A673 (cell line): ENCODE measurements at regions of chr22 and their contacts with region 1.

Region 1: GRCh38 chr22:38716826-38717225 is 11.1 kb downstream of the GTPBP1 start:
- DNase-seq: no peak
- H3K4me3 ChIP-seq: no peak overlapping the region
- H3K27ac ChIP-seq: no peak overlapping the region
- H3K4me1 ChIP-seq: peaks cover 35% of the 10 kb centered on the region
- H3K27me3 ChIP-seq: no peaks in the 10 kb centered on the region
- CTCF ChIP-seq: no peak

Region 2: DNA sequence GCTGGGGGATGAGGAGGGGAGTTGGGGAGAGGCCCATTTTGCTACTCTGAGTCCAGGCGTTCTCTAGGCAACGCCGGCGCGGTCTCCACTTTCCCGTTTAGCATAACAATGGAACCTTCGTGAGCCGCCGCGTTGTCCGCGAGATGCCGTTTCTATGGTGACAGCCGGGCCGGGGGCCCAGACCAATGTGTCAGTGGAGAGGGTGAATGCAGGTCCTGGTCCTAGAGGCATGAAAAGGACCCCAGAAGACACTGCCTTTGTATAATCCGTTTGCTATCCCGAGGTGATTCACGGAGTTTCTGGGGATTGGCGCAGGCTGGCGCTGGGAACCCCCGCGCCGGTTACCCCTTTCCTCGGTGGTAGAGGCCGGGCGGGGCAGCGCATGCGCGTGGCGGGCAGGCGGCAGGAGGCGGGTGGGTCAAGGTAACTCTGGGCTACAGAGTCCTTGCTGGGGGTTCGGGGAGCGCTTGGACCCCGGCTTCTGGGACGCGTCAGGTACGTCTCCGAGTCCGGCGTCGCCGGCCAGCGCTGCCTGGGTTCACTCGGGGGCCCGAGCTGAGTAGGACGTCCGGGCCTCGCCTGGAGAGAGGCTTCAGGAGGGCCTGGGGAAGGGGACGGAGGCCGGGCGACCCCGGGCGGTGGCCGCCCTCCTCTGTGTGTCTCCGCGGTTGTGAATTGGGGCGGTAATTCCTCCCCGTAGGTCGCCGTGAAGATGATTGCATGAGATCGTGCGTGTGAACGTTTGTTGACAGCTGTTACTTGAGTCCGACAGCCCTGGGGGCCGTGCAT is 60.4 kb before region 1 on chr22 and contains the starts of genes CBY1 and FAM227A:
- CTCF ChIA-PET with region 1: no interaction called
- POLR2A ChIA-PET with region 1: no interaction called
- intact Hi-C with region 1: no loop called
- DNase-seq: peak; percentile 96
- H3K4me3 ChIP-seq: peak within 1 kb of the TSS; percentile 97
- H3K27ac ChIP-seq: peak within 1 kb of the TSS; percentile 100
- H3K4me1 ChIP-seq: peaks cover 5% of the 10 kb centered on the region
- H3K27me3 ChIP-seq: no peaks in the 10 kb centered on the region
- CTCF ChIP-seq: no peak
- total RNA-seq, gene CBY1: 22.1 and 28.5 TPM in 2 replicates
- total RNA-seq, gene FAM227A: 3.8 and 5.3 TPM in 2 replicates

Region 3: DNA sequence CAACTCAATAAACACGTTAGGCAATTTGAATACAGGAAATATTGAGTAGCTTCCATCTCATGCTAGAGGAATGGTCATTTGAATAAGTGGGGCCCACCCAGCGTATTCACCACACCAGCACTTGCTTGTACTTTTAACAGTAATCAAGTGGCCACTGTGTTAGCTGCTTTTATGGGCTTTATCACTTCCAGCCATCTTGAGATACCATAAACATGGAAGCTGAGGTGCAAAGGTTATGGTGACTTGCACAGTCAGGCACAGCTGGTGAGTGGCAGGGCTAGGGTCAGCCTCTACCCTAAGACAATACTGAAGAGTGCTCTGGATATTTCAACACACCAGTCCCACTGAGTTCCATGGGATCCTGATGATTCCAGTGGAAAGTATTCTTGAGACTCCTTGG is 22.8 kb before region 1 on chr22:
- CTCF ChIA-PET with region 1: no interaction called
- POLR2A ChIA-PET with region 1: interaction called, 13 read pairs
- intact Hi-C with region 1: no loop called
- DNase-seq: no peak
- H3K4me3 ChIP-seq: no peak overlapping the region
- H3K27ac ChIP-seq: no peak overlapping the region
- H3K4me1 ChIP-seq: peaks cover 14% of the 10 kb centered on the region
- H3K27me3 ChIP-seq: no peaks in the 10 kb centered on the region
- CTCF ChIP-seq: no peak